B cell (primary cell): ENCODE measurements at regions of chr5 and their contacts with region 1.

Region 1: DNA sequence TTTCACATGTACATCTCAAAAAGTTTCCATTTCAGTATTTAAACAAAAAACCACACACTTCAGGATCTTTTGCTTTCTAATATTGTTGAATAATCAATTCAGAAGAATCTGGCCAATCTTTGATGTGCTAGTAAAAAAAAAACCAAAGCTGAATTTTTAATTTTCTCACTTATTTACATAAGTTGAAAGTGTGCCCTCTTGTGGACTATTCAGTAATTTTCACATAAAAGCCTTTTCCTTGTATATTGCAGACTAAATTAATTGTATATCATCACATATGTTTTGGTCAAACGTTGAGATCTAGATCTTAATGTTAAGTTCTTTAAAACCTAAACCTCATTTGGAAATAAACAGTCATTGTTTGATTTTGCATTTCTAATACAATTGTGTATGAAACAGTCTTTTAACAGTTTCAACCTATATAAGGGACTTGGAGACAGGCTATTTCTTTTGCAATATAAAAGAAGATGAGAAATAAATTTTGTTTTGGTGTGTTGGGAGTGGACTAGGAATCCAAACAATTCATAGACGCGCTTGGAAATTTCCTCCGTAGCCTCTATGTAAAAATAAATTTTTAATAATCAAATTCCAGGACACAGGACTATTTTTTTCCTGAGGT is 68.1 kb downstream of the NIPBL start:
- DNase-seq: peak; percentile 71
- ATAC-seq: no peak
- H3K4me3 ChIP-seq: no peak overlapping the region
- H3K4me3 Mint-ChIP-seq: no peak overlapping the region
- H3K27ac ChIP-seq: no peak overlapping the region
- H3K27ac Mint-ChIP-seq: no peak overlapping the region
- H3K4me1 ChIP-seq: no peaks in the 10 kb centered on the region
- H3K4me1 Mint-ChIP-seq: peaks cover 42% of the 10 kb centered on the region
- H3K27me3 ChIP-seq: no peaks in the 10 kb centered on the region
- H3K27me3 Mint-ChIP-seq: no peaks in the 10 kb centered on the region
- CTCF ChIP-seq: peak; percentile 77

Region 2: GRCh38 chr5:36744773-36745589 is 199.7 kb before region 1 on chr5:
- CTCF ChIA-PET with region 1: interaction called, 17 read pairs
- POLR2A ChIA-PET with region 1: no interaction called
- intact Hi-C with region 1: loop called (anchors 1 kb)
- DNase-seq: peak; percentile 70
- ATAC-seq: peak; percentile 70
- H3K4me3 ChIP-seq: peak overlapping the region; percentile 47 to 88 (median 63)
- H3K4me3 Mint-ChIP-seq: peak overlapping the region; percentile 95
- H3K27ac ChIP-seq: peak overlapping the region in 1 of 2 donors; percentile 44
- H3K27ac Mint-ChIP-seq: peak overlapping the region; percentile 94
- H3K4me1 ChIP-seq: peaks cover 20% of the 10 kb centered on the region in 2 donors
- H3K4me1 Mint-ChIP-seq: peaks cover 20% of the 10 kb centered on the region
- H3K27me3 ChIP-seq: peaks cover 0 to 13% (median 3%) of the 10 kb centered on the region in 4 experiments
- H3K27me3 Mint-ChIP-seq: peaks cover 12% of the 10 kb centered on the region
- CTCF ChIP-seq: peak; percentile 36

Region 3: GRCh38 chr5:36826694-36827093 is 118.0 kb before region 1 on chr5:
- CTCF ChIA-PET with region 1: no interaction called
- POLR2A ChIA-PET with region 1: no interaction called
- intact Hi-C with region 1: no loop called
- DNase-seq: no peak
- ATAC-seq: no peak
- H3K4me3 ChIP-seq: no peak overlapping the region
- H3K4me3 Mint-ChIP-seq: no peak overlapping the region
- H3K27ac ChIP-seq: no peak overlapping the region
- H3K27ac Mint-ChIP-seq: no peak overlapping the region
- H3K4me1 ChIP-seq: no peaks in the 10 kb centered on the region
- H3K4me1 Mint-ChIP-seq: no peaks in the 10 kb centered on the region
- H3K27me3 ChIP-seq: no peaks in the 10 kb centered on the region
- H3K27me3 Mint-ChIP-seq: peaks cover 33% of the 10 kb centered on the region
- CTCF ChIP-seq: peak; percentile 9

Region 4: GRCh38 chr5:36875790-36876388 is 68.8 kb before region 1 on chr5:
- CTCF ChIA-PET with region 1: interaction called, 7 read pairs
- POLR2A ChIA-PET with region 1: interaction called, 3 read pairs
- intact Hi-C with region 1: loop called (anchors 2 kb)
- DNase-seq: peak; percentile 89
- ATAC-seq: peak; percentile 70
- H3K4me3 ChIP-seq: peak overlapping the region; percentile 85 to 99 (median 94)
- H3K4me3 Mint-ChIP-seq: peak overlapping the region; percentile 91
- H3K27ac ChIP-seq: peak overlapping the region; percentile 92 to 98
- H3K27ac Mint-ChIP-seq: peak overlapping the region; percentile 95
- H3K4me1 ChIP-seq: peaks cover 19 to 42% of the 10 kb centered on the region in 2 donors
- H3K4me1 Mint-ChIP-seq: peaks cover 40% of the 10 kb centered on the region
- H3K27me3 ChIP-seq: no peaks in the 10 kb centered on the region
- H3K27me3 Mint-ChIP-seq: no peaks in the 10 kb centered on the region
- CTCF ChIP-seq: peak; percentile 71

Region 5: GRCh38 chr5:36900322-36900721 is 44.4 kb before region 1 on chr5:
- CTCF ChIA-PET with region 1: no interaction called
- POLR2A ChIA-PET with region 1: no interaction called
- intact Hi-C with region 1: loop called (anchors 5 kb)
- DNase-seq: no peak
- ATAC-seq: no peak
- H3K4me3 ChIP-seq: no peak overlapping the region
- H3K4me3 Mint-ChIP-seq: no peak overlapping the region
- H3K27ac ChIP-seq: no peak overlapping the region
- H3K27ac Mint-ChIP-seq: no peak overlapping the region
- H3K4me1 ChIP-seq: peaks cover 15 to 33% of the 10 kb centered on the region in 2 donors
- H3K4me1 Mint-ChIP-seq: peaks cover 73% of the 10 kb centered on the region
- H3K27me3 ChIP-seq: no peaks in the 10 kb centered on the region
- H3K27me3 Mint-ChIP-seq: no peaks in the 10 kb centered on the region
- CTCF ChIP-seq: no peak

Region 6: DNA sequence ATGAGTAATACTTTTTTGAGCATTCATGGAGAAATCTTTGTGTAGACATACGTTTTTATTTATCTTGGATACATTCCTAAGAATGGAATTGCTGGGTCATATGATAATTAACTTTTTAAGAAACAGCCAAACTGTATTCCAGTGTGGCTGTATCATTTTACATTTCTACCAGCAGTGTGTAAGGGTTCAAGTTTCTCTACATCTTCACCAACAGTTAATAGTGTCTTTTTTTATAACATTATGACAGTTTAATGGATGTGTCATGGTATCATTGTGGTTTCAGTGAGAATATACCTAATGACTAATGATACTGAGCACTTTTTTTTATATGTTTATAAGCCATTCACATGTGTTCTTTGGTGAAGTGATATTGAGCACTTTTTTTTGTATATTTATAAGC is 15.8 kb before region 1 on chr5:
- CTCF ChIA-PET with region 1: interaction called, 7 read pairs
- POLR2A ChIA-PET with region 1: no interaction called
- intact Hi-C with region 1: loop called (anchors 2 kb)
- DNase-seq: no peak
- ATAC-seq: no peak
- H3K4me3 ChIP-seq: no peak overlapping the region
- H3K4me3 Mint-ChIP-seq: no peak overlapping the region
- H3K27ac ChIP-seq: no peak overlapping the region
- H3K27ac Mint-ChIP-seq: no peak overlapping the region
- H3K4me1 ChIP-seq: peaks cover 0 to 35% of the 10 kb centered on the region in 2 donors
- H3K4me1 Mint-ChIP-seq: peaks cover 69% of the 10 kb centered on the region
- H3K27me3 ChIP-seq: no peaks in the 10 kb centered on the region
- H3K27me3 Mint-ChIP-seq: no peaks in the 10 kb centered on the region
- CTCF ChIP-seq: no peak